Activated CD4-positive, alpha-beta memory T cell treated with anti-CD3 and anti-CD28 coated beads for 36 hours (primary cell): ENCODE measurements at regions of chr5 and their contacts with region 1.

Region 1: DNA sequence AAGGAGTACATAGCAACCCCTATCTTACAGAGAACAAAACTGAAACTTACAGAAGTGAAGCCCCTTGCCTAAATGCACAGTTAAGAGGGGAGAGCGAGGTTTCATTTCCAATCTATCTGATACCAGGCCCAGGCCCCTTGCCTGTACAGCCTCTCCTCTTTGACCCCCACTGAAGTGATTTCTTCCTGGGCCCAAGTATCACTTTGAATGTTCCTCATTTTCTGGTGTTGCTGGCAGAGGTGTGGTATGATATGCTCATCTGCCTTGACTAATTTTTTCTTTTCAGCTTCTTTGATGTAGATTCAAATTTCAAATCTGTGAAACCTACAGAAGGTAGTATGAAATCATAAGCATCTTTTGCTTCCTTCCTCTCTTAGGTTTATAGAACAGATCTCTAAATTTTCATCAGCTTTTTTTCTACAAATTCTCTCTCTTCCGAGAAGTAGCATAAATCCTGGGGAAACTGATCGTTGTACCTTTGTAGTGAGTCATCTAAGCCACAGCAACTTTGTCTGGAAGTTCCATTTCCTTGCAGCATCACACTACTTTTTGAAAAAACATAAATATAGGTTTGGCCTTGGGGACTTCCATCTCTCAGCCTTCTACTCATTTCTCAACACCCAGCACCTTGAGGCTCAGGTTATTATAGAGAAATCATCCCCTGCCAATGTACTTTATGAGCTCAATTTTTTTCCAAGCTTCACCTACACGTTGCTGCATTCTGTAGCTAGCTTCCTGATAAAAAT is 402.4 kb upstream of the PTGER4 start:
- DNase-seq: peak; percentile 63
- H3K4me3 Mint-ChIP-seq: peak overlapping the region; percentile 18
- H3K27ac Mint-ChIP-seq: peak overlapping the region; percentile 97
- H3K4me1 Mint-ChIP-seq: peaks cover 61% of the 10 kb centered on the region
- H3K27me3 Mint-ChIP-seq: no peaks in the 10 kb centered on the region

Region 2: DNA sequence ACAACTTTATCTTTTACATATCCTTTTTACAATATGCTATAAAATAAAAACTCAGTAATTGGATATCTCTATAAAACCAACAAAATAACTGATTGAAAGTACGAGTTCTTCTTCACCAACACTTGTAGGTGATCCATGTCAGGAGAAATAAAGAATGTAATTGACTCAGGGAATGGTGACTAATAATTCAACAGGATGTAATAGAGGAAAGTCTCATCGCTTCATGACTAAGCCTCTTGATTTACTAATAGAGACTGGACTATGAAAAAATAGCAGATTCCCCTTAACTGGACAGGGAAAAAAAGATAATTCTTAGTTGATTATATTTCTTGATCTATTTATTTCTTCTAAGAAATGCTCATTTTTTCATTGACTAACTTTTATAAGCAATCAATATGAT is 105.4 kb before region 1 on chr5:
- CTCF ChIA-PET with region 1: no interaction called
- POLR2A ChIA-PET with region 1: no interaction called
- intact Hi-C with region 1: loop called (anchors 5 kb)
- DNase-seq: no peak
- H3K4me3 Mint-ChIP-seq: no peak overlapping the region
- H3K27ac Mint-ChIP-seq: no peak overlapping the region
- H3K4me1 Mint-ChIP-seq: peaks cover 16% of the 10 kb centered on the region
- H3K27me3 Mint-ChIP-seq: no peaks in the 10 kb centered on the region

Region 3: DNA sequence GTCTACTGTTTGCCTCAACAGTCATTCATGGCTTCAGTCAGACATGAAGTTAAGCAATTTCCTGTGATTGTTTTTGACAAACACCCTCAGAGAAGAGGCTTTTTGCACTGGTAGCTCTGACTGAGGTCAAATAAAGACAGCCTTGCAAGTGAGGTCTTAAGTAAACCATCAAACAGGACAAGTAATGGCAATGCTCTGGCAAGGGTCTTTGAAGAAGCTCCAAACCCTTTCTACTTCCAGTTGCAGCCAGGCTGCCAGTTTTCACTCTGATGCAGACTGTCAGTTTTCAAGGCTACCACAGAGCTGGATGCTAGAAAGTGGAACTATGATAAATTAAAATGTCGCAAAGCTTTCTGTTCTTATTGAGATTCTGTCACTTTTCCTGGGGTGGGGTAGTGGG is 19.1 kb before region 1 on chr5:
- CTCF ChIA-PET with region 1: interaction called, 3 read pairs
- POLR2A ChIA-PET with region 1: no interaction called
- intact Hi-C with region 1: loop called (anchors 1 kb)
- DNase-seq: peak; percentile 24
- H3K4me3 Mint-ChIP-seq: no peak overlapping the region
- H3K27ac Mint-ChIP-seq: peak overlapping the region; percentile 67
- H3K4me1 Mint-ChIP-seq: peaks cover 11% of the 10 kb centered on the region
- H3K27me3 Mint-ChIP-seq: no peaks in the 10 kb centered on the region

Region 4: DNA sequence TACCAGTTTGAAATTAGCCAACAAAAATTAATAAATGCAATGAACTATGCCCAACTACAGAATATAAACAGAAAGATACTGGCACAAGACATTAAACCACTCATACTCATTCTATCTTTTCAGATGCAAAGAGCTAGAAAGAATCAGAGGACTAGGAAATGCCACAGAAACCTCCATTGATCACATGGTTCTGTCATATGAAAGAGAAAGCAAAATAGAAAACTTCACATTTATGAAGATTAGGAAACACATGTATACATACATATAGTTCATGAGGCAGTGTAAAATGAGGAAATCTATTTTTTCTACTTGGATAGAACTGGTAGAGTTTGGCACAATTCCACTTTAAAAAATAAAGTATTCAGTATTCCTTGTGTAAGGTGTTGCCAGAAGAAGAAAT is 127.3 kb after region 1 on chr5:
- CTCF ChIA-PET with region 1: no interaction called
- POLR2A ChIA-PET with region 1: interaction called, 13 read pairs
- intact Hi-C with region 1: loop called (anchors 1 kb)
- DNase-seq: no peak
- H3K4me3 Mint-ChIP-seq: no peak overlapping the region
- H3K27ac Mint-ChIP-seq: peak overlapping the region; percentile 99
- H3K4me1 Mint-ChIP-seq: peaks cover 90% of the 10 kb centered on the region
- H3K27me3 Mint-ChIP-seq: no peaks in the 10 kb centered on the region

Region 5: GRCh38 chr5:40486437-40487275 is 209.3 kb after region 1 on chr5:
- CTCF ChIA-PET with region 1: interaction called, 4 read pairs
- POLR2A ChIA-PET with region 1: interaction called, 4 read pairs
- intact Hi-C with region 1: loop called (anchors 1 kb)
- DNase-seq: peak; percentile 77
- H3K4me3 Mint-ChIP-seq: peak overlapping the region; percentile 7
- H3K27ac Mint-ChIP-seq: peak overlapping the region; percentile 84
- H3K4me1 Mint-ChIP-seq: peaks cover 81% of the 10 kb centered on the region
- H3K27me3 Mint-ChIP-seq: no peaks in the 10 kb centered on the region